Common myeloid progenitor, CD34-positive (primary cell): ENCODE measurements at regions of chr17 and their contacts with region 1.

Region 1: DNA sequence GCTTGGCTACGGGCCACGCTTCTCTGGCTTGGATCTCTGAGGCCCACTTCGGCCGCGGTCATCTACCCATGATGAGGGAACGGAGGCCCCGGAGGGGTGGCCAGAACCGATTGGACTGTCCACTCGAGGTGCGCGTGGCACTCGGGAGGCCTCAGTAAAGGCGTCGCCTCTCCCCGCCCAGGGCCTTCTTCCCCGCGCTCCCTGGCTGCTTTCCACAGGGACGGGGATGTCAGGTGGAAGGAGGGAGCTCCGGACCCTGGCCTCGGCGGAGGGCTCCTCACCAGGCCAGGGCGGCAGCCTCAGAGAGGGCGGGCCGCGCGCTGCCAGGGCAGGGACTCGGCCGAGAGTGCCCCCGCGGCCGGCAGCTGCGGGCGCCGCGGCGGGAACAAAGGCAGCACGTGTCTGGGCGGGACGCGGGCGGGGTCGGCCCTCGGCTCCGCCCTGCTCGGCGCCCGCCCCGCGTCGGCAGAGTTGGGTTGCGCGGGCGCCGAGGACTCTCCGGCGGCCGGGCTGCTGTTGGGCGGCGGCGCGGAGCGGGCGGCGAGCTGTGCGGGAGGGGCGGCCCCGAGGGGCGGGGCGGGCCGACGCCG is 587 bp upstream of the CDK5R1 start:
- DNase-seq: peak; percentile 54 to 78 (median 73)
- H3K4me3 ChIP-seq: peak overlapping the region; percentile 40 to 77 (median 66)
- H3K27ac ChIP-seq: no peak overlapping the region
- H3K4me1 ChIP-seq: peaks cover 0 to 14% (median 12%) of the 10 kb centered on the region in 4 experiments
- H3K27me3 ChIP-seq: peaks cover 0 to 2% (median 0%) of the 10 kb centered on the region in 5 experiments

Region 2: GRCh38 chr17:32444308-32445073 is 41.7 kb before region 1 on chr17 and contains the start of gene PSMD11:
- CTCF ChIA-PET with region 1: interaction called, 10 read pairs
- POLR2A ChIA-PET with region 1: no interaction called
- DNase-seq: peak; percentile 98 to 99 (median 99)
- H3K4me3 ChIP-seq: peak within 1 kb of the TSS; percentile 86 to 99 (median 95)
- H3K27ac ChIP-seq: peak within 1 kb of the TSS; percentile 89 to 94
- H3K4me1 ChIP-seq: peaks cover 9 to 21% (median 15%) of the 10 kb centered on the region in 4 experiments
- H3K27me3 ChIP-seq: peaks cover 0 to 2% (median 0%) of the 10 kb centered on the region in 5 experiments

Region 3: DNA sequence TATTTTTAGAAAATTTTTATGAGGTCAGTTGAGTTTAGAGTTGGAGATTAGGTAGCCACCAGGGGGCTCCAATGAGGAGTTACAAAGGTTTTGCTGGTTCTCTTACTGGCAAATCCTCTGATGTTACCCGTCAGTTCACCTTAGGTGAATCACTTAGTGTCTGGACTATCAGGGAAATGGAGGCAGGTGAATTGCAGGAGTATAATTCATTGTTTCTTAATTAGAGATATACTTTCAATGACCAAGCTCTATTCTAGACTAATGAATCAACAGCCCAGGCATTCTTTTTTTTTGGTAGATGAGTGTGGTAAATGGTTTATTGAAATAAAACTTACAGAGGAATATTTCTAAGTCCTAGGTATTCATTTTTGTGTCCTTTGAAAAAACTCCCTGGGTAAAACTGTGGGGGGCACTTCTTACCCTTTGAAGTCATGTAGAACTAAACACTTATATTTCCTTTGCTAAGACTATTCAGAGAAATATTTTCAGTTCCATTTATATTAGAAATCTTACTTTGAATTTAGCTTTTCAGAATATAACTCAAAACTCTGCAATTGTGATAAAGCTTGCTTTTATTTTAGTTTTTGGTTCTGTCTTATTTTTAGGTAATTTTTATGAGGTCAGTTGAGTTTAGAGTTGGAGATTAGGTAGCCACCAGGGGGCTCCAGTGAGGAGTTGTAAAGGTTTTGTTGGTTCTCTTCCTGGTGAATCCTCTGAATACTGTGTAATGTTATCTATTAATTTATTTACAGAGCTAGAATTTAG is 24.2 kb before region 1 on chr17:
- CTCF ChIA-PET with region 1: interaction called, 24 read pairs
- POLR2A ChIA-PET with region 1: interaction called, 4 read pairs
- DNase-seq: peak; percentile 61 to 82 (median 79)
- H3K4me3 ChIP-seq: no peak overlapping the region
- H3K27ac ChIP-seq: no peak overlapping the region
- H3K4me1 ChIP-seq: no peaks in the 10 kb centered on the region
- H3K27me3 ChIP-seq: no peaks in the 10 kb centered on the region

Region 4: DNA sequence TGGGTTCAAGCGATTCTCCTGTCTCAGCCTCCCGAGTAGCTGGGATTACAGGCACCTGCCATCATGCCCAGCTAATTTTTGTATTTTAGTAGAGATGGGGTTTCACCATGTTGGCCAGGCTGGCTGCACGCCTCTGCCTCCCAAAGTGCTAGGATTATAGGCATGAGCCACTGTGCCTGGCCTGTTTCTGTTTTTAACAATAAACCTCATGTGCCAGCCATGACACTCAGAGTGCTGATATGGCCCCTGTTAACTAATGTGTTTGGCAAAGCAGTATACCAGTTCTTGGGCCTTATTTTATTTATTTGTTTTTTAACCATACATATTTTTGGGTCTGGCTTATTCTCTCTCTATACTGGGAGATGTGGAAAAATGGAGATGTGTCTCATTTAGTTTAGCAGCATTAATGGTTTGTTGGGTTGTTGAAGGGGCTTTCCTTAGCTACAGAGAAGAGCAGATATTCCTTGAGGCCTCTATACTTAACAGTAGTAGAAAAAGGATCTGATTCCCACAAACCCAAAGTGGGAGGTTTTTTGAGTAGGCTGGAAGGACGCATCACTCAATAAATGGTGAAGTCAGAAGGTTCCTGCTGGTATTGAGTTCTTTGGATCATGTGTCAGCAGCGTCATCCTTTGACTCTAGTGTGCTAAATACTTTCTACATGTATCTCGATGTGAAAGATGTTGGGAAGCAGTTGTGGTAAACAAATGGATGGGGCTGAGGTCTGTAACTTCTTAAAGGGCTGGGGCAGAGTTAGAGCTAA is 15.6 kb before region 1 on chr17:
- CTCF ChIA-PET with region 1: interaction called, 17 read pairs
- POLR2A ChIA-PET with region 1: interaction called, 3 read pairs
- DNase-seq: no peak
- H3K4me3 ChIP-seq: no peak overlapping the region
- H3K27ac ChIP-seq: no peak overlapping the region
- H3K4me1 ChIP-seq: no peaks in the 10 kb centered on the region
- H3K27me3 ChIP-seq: no peaks in the 10 kb centered on the region

Region 5: DNA sequence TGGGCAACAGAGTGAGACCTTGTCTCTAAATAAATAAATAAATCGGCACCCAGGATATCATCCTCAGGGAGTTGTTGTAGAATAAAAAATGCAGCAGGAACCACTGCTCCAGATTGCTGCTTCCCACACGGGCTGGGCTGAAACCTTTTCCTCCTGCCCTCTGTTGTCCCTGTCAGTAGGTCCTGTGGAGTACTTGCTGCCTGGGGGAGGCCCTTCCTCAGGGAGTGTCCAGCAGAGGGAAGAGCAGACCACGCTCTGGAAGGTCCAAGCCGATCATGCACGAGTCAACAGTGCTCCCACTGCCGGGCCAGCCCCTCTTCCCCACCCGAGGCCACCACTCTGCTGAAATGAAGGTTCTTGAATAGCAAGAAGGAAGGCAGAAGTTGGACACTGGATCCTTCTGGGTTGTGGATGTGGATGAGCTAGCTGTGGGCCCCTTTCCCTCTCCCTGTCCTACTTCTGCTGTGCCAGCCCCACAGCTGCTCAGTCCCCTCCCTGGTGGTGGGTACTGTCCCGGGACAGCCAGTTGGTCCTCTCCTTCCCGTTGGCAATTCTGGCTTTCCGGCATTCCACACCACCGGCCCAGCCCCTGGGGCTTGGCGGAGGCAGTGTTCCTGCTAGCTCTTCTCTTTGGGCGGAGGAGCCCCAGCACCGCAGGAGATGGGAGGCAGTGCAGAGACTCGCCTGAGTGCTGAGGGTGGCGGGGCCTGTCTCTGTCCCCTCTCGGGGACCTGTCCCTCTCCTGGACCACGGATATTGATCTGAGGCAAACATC is 11.4 kb after region 1 on chr17:
- CTCF ChIA-PET with region 1: no interaction called
- POLR2A ChIA-PET with region 1: no interaction called
- DNase-seq: no peak
- H3K4me3 ChIP-seq: no peak overlapping the region
- H3K27ac ChIP-seq: no peak overlapping the region
- H3K4me1 ChIP-seq: peaks cover 0 to 14% (median 11%) of the 10 kb centered on the region in 4 experiments
- H3K27me3 ChIP-seq: no peaks in the 10 kb centered on the region

Region 6: GRCh38 chr17:32588982-32589381 is 102.8 kb after region 1 on chr17:
- CTCF ChIA-PET with region 1: interaction called, 11 read pairs
- POLR2A ChIA-PET with region 1: no interaction called
- DNase-seq: peak in 2 of 3 donors; percentile 19 to 27
- H3K4me3 ChIP-seq: no peak overlapping the region
- H3K27ac ChIP-seq: no peak overlapping the region
- H3K4me1 ChIP-seq: no peaks in the 10 kb centered on the region
- H3K27me3 ChIP-seq: no peaks in the 10 kb centered on the region

Region 7: GRCh38 chr17:32755045-32755805 is 269.0 kb after region 1 on chr17:
- CTCF ChIA-PET with region 1: interaction called, 20 read pairs
- POLR2A ChIA-PET with region 1: no interaction called
- DNase-seq: peak; percentile 75 to 85 (median 82)
- H3K4me3 ChIP-seq: no peak overlapping the region
- H3K27ac ChIP-seq: no peak overlapping the region
- H3K4me1 ChIP-seq: no peaks in the 10 kb centered on the region
- H3K27me3 ChIP-seq: no peaks in the 10 kb centered on the region